ENCODE measurements at regions of chr4 and their contacts with region 1.

Region 1: DNA sequence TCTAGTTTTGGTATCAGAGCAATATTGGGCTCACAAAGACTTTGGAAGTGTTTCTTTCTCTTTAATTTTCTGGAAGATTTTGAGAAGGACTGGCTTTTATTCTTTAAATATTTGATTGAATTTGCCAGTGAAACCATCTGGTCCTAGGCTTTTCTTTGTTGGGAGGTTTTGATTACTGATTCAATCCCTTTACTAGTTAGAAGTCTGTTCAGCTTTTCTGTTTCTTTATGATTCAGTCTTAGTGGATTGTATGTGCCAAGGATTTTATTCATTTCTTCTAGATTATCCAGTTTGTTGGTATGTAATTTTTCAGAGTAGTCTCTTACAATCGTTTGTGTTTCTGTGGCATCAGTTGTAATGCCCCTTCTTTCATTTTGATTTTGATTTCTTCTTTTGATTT is 28.6 kb downstream of the GLRB start:
- H3K4me3 ChIP-seq: no peak overlapping the region
- H3K27ac ChIP-seq: no peak overlapping the region
- H3K4me1 ChIP-seq: no peaks in the 10 kb centered on the region
- CTCF ChIP-seq: no peak

Region 2: GRCh38 chr4:156981262-156981769 is 123.2 kb before region 1 on chr4:
- CTCF ChIA-PET with region 1: no interaction called
- POLR2A ChIA-PET with region 1: interaction called, 13 read pairs
- H3K4me3 ChIP-seq: no peak overlapping the region
- H3K27ac ChIP-seq: no peak overlapping the region
- H3K4me1 ChIP-seq: no peaks in the 10 kb centered on the region
- CTCF ChIP-seq: no peak